H1 (cell line): ENCODE measurements at regions of chr5 and their contacts with region 1.

Region 1: GRCh38 chr5:119470851-119471451 is 18.7 kb downstream of the HSD17B4 start:
- DNase-seq: no peak
- H3K4me3 ChIP-seq: peak overlapping the region in 1 of 4 experiments; percentile 42; a peak in 3 of 8 replicates
- H3K27ac ChIP-seq: no peak overlapping the region
- H3K4me1 ChIP-seq: peaks cover 3 to 11% (median 7%) of the 10 kb centered on the region in 4 experiments; a peak in 6 of 7 replicates
- H3K27me3 ChIP-seq: peaks cover 0 to 2% (median 0%) of the 10 kb centered on the region in 4 experiments; a peak in 1 of 7 replicates
- CTCF ChIP-seq: peak in 2 of 3 experiments; percentile 39 to 53; a peak in 2 of 4 replicates
- EP300 ChIP-seq: no peak
- POLR2A ChIP-seq: no peak
- RAD21 ChIP-seq: peak; percentile 83 to 84

Region 2: GRCh38 chr5:119395080-119395836 is 75.7 kb before region 1 on chr5:
- CTCF ChIA-PET with region 1: no interaction called
- POLR2A ChIA-PET with region 1: no interaction called
- DNase-seq: no peak
- H3K4me3 ChIP-seq: no peak overlapping the region
- H3K27ac ChIP-seq: no peak overlapping the region
- H3K4me1 ChIP-seq: peaks cover 0 to 5% (median 0%) of the 10 kb centered on the region in 4 experiments; a peak in 1 of 7 replicates
- H3K27me3 ChIP-seq: no peaks in the 10 kb centered on the region
- CTCF ChIP-seq: no peak
- EP300 ChIP-seq: no peak
- POLR2A ChIP-seq: no peak
- RAD21 ChIP-seq: no peak

Region 3: GRCh38 chr5:119405419-119405818 is 65.5 kb before region 1 on chr5:
- CTCF ChIA-PET with region 1: no interaction called
- POLR2A ChIA-PET with region 1: no interaction called
- DNase-seq: peak in 1 of 2 experiments; percentile 24
- H3K4me3 ChIP-seq: no peak overlapping the region
- H3K27ac ChIP-seq: no peak overlapping the region
- H3K4me1 ChIP-seq: peaks cover 0 to 7% (median 2%) of the 10 kb centered on the region in 4 experiments; a peak in 3 of 7 replicates
- H3K27me3 ChIP-seq: no peaks in the 10 kb centered on the region
- CTCF ChIP-seq: no peak
- EP300 ChIP-seq: no peak
- POLR2A ChIP-seq: no peak
- RAD21 ChIP-seq: no peak

Region 4: DNA sequence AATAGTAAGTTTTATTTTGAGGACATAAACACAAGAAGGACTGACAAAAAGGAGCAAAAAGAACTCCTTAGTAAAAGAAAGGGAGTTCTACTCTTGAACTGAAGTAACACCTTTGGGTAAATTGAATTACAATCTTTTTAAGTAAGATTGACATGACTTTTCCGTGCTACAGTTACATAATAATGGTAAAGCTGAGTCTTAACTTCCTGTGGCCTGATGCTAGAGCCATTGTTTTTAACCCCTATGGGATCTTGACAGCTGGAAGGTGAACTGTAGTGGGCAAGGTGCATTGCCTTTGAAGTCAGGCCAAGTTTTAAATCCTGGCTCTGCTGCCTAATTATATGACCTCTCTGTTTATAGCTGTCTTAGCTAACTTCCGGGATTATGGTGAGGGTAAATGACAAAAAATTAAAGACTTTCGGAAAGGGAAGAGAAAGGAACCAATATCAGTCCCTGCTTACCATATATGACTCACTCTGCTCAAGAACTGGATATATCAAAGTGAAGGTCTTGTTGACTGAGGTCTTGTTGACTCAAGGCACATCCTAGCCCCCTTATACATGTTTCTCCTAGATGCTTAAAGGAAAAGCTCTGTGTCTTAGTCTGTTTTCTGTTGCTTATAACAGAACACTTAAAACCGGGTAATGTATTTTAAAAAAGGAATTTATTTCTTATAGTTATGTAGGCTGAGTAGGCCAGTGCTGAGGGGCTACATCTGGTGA is 11.9 kb before region 1 on chr5:
- CTCF ChIA-PET with region 1: interaction called, 13 read pairs
- POLR2A ChIA-PET with region 1: no interaction called
- DNase-seq: no peak
- H3K4me3 ChIP-seq: peak overlapping the region in 1 of 4 experiments; percentile 19; a peak in 2 of 8 replicates
- H3K27ac ChIP-seq: no peak overlapping the region
- H3K4me1 ChIP-seq: peaks cover 0 to 13% (median 9%) of the 10 kb centered on the region in 4 experiments; a peak in 5 of 7 replicates
- H3K27me3 ChIP-seq: no peaks in the 10 kb centered on the region
- CTCF ChIP-seq: no peak
- EP300 ChIP-seq: peak in 1 of 2 experiments; percentile 68; a peak in 1 of 3 replicates
- POLR2A ChIP-seq: no peak
- RAD21 ChIP-seq: no peak